Left ventricle myocardium inferior (tissue), 1 donor: ENCODE measurements at regions of chr12 and their contacts with region 1.

Region 1: DNA sequence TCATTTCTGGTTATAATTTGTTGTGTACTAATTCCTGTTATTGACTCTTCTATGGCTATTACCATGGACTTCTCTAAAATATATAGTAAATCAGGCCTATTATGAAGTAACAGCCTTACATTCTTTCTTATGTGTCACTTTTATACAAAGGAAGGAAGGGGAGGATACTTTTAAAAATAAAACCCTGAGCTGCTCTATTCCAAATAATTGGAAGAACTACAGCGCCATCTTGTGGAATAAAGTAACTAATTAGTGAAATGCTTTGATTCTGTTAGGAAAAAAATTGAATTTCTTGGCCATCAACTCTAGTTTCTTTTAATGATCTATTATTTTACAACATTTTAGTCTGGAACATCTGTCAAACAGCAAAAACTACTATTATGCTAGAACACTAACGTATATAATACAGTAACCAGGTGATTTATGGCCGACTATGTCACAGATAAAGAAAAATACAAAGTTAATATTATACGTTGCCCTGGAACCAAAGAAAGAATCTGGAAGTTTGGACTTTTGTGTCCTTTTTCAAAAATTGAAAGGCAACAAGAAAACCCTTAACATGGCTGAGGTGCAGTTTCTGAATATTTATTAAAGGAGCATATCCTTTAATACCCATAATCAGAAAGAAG is 55.0 kb upstream of the NELL2 start:
- DNase-seq: no peak
- H3K4me3 ChIP-seq: no peak overlapping the region
- H3K27ac ChIP-seq: no peak overlapping the region
- H3K4me1 ChIP-seq: no peaks in the 10 kb centered on the region
- H3K27me3 ChIP-seq: no peaks in the 10 kb centered on the region
- CTCF ChIP-seq: peak; percentile 68

Region 2: DNA sequence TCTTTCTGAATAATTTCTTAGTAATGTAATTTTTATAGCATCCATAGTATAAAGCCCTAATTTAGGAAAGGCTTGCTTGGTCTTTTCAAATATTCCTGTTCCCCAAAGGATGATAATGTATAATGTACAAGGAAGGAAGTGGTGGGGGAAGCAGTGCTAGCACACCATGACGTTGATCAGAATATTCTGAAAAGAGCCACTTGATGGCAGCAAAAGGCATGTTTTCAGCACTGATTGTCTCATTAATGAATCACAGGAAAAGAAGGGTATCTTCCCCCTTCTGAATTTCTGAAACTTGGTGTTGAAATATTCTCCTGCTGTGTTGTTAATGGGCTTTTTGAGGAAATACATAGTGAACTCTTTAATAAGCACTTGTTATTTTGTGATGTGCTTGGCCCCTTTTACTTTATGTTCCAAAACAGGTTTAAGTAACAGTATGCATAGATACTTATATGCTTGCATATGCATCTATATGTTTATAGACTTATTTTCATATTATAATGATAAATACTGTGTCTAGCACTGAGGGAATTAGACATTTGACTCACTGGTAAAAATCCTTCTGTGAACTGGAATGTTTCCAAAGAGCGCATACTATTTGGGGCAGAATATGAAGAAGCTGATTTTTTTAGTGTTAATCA is 973.2 kb before region 1 on chr12:
- intact Hi-C with region 1: loop called (anchors 5 kb)
- DNase-seq: no peak
- H3K4me3 ChIP-seq: no peak overlapping the region
- H3K27ac ChIP-seq: no peak overlapping the region
- H3K4me1 ChIP-seq: no peaks in the 10 kb centered on the region
- H3K27me3 ChIP-seq: no peaks in the 10 kb centered on the region
- CTCF ChIP-seq: peak; percentile 63

Region 3: GRCh38 chr12:44015335-44015941 is 915.6 kb before region 1 on chr12:
- intact Hi-C with region 1: loop called (anchors 5 kb)
- DNase-seq: no peak
- H3K4me3 ChIP-seq: no peak overlapping the region
- H3K27ac ChIP-seq: no peak overlapping the region
- H3K4me1 ChIP-seq: no peaks in the 10 kb centered on the region
- H3K27me3 ChIP-seq: no peaks in the 10 kb centered on the region
- CTCF ChIP-seq: peak; percentile 65

Region 4: DNA sequence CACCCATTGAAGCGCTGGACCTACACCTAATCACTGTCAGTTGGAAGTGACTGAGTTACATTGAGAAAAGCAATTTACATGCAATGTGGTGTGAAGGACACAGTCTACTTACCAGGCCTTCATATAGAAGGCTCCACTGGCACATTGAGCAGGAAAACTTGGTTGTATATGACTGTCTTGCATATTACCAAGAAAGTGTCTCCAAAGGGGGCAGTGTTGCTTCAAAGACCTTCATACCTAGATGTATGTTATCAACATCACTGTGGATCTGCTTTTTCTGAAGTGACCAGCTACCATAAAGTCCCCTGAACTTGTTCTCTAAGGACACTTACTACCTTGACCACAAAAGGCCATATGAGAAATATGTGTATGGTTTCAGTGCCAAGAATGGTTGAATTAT is 119.0 kb before region 1 on chr12:
- intact Hi-C with region 1: no loop called
- DNase-seq: no peak
- H3K4me3 ChIP-seq: no peak overlapping the region
- H3K27ac ChIP-seq: no peak overlapping the region
- H3K4me1 ChIP-seq: no peaks in the 10 kb centered on the region
- H3K27me3 ChIP-seq: no peaks in the 10 kb centered on the region
- CTCF ChIP-seq: no peak